Activated naive CD4-positive, alpha-beta T cell treated with anti-CD3 and anti-CD28 coated beads for 36 hours (primary cell): ENCODE measurements at regions of chr1 and their contacts with region 1.

Region 1: GRCh38 chr1:116934586-116935207 is 25.0 kb downstream of the PTGFRN start:
- DNase-seq: no peak
- H3K4me3 Mint-ChIP-seq: no peak overlapping the region
- H3K27ac Mint-ChIP-seq: no peak overlapping the region
- H3K4me1 Mint-ChIP-seq: peaks cover 18% of the 10 kb centered on the region
- H3K27me3 Mint-ChIP-seq: no peaks in the 10 kb centered on the region

Region 2: GRCh38 chr1:116439701-116440100 is 495.0 kb before region 1 on chr1:
- CTCF ChIA-PET with region 1: no interaction called
- intact Hi-C with region 1: no loop called
- DNase-seq: no peak
- H3K4me3 Mint-ChIP-seq: no peak overlapping the region
- H3K27ac Mint-ChIP-seq: no peak overlapping the region
- H3K4me1 Mint-ChIP-seq: no peaks in the 10 kb centered on the region
- H3K27me3 Mint-ChIP-seq: no peaks in the 10 kb centered on the region

Region 3: DNA sequence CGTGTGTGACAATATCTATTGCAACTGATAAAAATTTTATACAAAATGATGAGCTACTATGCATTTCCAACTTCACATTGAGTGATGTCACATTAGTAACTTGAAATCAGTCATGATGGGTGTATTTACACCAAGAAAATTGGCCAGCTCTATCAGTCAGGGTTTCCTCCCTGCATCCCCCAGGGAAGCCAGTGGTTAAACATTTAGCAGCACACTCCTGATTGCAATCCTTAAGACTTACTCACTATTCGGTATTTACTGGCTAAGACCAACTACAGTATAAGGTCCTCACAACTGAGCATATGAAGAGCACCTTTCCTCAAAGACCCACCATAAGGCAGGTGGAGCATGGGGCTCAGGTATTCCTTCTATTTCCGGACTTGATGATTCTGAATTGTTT is 66.3 kb before region 1 on chr1:
- CTCF ChIA-PET with region 1: no interaction called
- intact Hi-C with region 1: no loop called
- DNase-seq: no peak
- H3K4me3 Mint-ChIP-seq: no peak overlapping the region
- H3K27ac Mint-ChIP-seq: no peak overlapping the region
- H3K4me1 Mint-ChIP-seq: peaks cover 4% of the 10 kb centered on the region
- H3K27me3 Mint-ChIP-seq: no peaks in the 10 kb centered on the region

Region 4: GRCh38 chr1:116881879-116882520 is 52.7 kb before region 1 on chr1:
- CTCF ChIA-PET with region 1: interaction called, 4 read pairs
- intact Hi-C with region 1: loop called (anchors 1 kb)
- DNase-seq: peak; percentile 77
- H3K4me3 Mint-ChIP-seq: no peak overlapping the region
- H3K27ac Mint-ChIP-seq: no peak overlapping the region
- H3K4me1 Mint-ChIP-seq: peaks cover 12% of the 10 kb centered on the region
- H3K27me3 Mint-ChIP-seq: no peaks in the 10 kb centered on the region

Region 5: DNA sequence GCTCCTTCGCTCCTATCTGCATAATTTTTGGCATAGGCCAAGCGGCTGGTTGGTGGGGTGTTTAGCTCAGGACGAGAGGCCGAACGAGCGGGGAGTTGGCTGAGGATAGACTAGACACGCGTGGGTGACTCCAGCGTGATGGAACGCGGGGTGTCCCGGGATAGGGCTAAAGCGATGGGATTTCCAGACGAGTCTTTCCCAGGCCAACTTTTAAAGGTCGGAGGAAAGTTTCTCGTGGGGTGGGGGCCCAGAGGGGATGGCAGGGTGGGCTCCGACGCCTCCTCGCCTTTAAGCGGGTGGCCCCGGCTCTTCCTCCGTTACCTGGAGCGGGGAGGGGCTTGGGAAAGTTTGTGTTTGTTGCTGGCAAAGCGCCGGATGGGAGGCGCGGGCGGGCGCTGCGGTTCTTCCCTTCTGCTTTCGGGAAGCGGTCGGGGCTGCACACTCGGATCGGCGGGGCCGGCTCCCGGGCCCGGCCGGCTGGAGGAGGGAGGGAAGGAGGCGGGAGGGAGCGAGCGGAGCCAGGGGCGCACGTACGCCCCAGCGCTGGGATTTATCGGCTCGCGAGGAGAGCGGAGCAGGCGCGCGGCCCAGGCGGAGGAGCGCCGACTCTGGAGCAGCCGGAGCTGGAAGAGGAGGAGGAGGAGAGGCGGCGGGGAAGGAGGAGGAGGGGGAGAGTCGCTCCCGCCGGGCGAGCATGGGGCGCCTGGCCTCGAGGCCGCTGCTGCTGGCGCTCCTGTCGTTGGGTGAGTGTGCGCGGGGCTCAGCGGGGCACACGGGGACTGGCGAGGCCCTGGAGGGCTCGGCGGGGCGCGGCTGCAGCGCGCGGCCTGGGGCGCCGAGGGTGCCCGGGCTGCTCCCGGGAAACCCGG is 25.0 kb before region 1 on chr1 and contains the start of gene PTGFRN:
- CTCF ChIA-PET with region 1: interaction called, 8 read pairs
- intact Hi-C with region 1: loop called (anchors 1 kb)
- DNase-seq: peak; percentile 53
- H3K4me3 Mint-ChIP-seq: peak within 1 kb of the TSS; percentile 75
- H3K27ac Mint-ChIP-seq: peak within 1 kb of the TSS; percentile 30
- H3K4me1 Mint-ChIP-seq: peaks cover 3% of the 10 kb centered on the region
- H3K27me3 Mint-ChIP-seq: no peaks in the 10 kb centered on the region
- total RNA-seq, gene PTGFRN: 24.0 to 28.0 TPM

Region 6: DNA sequence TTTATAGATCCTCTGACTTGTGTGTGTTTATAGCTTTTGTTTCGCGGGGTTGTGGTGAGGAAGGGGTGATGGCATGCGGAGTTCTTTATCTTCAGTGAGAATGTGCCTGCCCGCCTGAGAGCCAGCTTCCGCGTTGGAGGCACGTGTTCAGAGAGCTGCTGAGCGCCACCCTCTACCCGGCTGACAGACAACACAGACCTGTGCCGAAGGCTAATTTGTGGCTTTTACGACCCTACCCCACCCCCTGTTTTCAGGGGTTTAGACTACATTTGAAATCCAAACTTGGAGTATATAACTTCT is 52.5 kb after region 1 on chr1:
- CTCF ChIA-PET with region 1: interaction called, 4 read pairs
- intact Hi-C with region 1: loop called (anchors 1 kb)
- DNase-seq: peak; percentile 83
- H3K4me3 Mint-ChIP-seq: peak overlapping the region; percentile 68
- H3K27ac Mint-ChIP-seq: peak overlapping the region; percentile 91
- H3K4me1 Mint-ChIP-seq: peaks cover 60% of the 10 kb centered on the region
- H3K27me3 Mint-ChIP-seq: no peaks in the 10 kb centered on the region

Region 7: DNA sequence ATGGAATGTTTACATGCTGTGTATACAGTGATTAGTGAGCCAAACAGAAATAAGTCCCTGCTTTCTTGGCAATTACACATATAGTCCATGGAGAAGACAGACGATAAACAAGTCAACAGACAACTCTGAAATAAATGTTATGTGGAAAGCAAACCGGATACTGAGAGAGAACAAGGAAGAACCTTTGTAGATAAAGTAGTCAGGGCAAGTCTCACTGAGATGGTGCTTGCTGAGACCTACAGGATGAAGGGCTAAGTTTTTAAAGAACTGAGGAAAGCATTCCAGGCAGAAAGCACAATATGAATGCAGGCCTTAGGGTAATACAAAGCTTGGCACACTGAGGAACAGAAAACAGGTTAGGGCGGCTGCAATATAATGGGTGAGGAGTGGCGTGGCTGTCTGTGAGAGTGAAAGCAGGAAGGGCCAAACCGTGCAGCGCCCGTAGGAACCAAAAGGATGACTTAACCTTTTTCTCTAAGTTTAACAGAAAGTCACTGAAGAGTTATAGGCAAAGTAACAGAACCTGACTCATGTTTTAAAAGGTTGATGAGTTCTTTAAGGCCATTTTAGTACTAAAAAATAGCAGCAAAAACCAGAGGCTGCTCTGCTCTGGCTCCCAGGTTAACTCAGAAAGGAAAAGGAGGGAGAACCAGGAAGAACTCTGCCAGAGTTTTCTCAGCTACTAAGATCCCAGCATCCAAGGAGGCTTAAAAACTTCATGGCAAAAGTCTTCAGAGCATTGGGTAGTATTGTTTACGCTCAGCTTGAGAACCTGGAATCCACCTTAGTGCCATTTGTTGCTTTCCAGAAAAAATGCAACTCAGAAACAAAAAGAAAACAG is 116.7 kb after region 1 on chr1:
- CTCF ChIA-PET with region 1: interaction called, 4 read pairs
- intact Hi-C with region 1: loop called (anchors 1 kb)
- DNase-seq: peak; percentile 69
- H3K4me3 Mint-ChIP-seq: peak overlapping the region; percentile 45
- H3K27ac Mint-ChIP-seq: peak overlapping the region; percentile 28
- H3K4me1 Mint-ChIP-seq: peaks cover 61% of the 10 kb centered on the region
- H3K27me3 Mint-ChIP-seq: no peaks in the 10 kb centered on the region

Region 8: DNA sequence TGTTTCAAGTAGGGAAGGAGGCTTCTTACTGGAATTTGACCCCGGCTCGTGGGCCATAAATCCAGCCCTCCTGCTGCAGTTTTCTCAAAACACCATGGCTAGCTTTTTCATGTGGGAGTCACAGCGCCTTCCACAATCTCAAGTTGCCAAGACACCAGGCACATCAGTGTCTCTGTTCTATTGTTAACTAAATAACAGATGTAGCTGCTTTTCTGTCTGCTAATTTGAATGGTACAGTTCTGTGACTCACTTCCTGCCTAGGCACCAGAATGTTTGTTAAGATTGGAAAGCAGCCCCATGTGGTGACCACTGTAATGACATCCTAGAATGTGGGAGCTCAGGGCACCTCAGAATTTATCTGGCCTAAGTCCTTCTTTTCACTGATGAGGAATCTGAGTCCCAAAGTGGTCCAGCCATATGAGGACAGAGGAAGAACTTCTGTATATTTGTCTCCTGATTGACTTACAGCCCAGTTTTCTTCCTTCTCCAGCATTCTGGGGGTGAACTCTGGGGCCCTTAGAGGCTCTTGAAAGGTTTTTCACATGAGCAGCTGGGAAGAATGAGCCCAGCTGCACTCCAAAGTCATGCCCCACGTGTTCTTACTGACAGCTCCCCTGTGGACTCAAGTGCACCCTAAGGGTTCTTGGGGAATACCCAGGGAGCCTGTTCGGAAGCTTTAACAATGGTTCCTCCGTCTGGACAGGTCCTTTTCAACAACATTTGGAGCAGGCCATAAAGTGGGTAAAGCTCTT is 159.3 kb after region 1 on chr1:
- CTCF ChIA-PET with region 1: no interaction called
- intact Hi-C with region 1: no loop called
- DNase-seq: peak; percentile 68
- H3K4me3 Mint-ChIP-seq: no peak overlapping the region
- H3K27ac Mint-ChIP-seq: no peak overlapping the region
- H3K4me1 Mint-ChIP-seq: peaks cover 20% of the 10 kb centered on the region
- H3K27me3 Mint-ChIP-seq: no peaks in the 10 kb centered on the region